ENCODE measurements at regions of chrX and their contacts with region 1.

Region 1: DNA sequence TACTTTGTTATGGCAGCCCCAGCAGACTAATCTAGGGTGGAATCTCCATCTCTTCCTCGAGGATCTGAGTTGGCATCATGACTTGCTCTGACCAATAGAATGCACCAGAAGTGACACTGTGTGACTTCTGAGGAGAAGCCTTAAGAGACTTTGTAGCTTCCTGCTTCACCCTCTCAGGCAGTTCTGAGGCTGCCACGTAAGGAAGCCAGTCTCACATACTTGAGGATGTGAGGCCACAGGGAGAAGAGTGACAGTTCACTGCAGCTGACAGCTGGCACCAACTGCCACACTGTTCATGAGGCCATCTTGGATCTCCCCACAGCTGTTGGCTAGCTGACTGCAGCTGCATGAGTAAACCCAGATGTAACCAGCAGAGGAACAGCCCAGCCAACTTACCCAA is 29.3 kb upstream of the BCOR start:
- DNase-seq: no peak
- ATAC-seq: no peak
- H3K4me3 ChIP-seq: no peak overlapping the region
- H3K27ac ChIP-seq: no peak overlapping the region
- H3K4me1 ChIP-seq: peaks cover 0 to 12% (median 0%) of the 10 kb centered on the region in 9 donors
- H3K27me3 ChIP-seq: no peaks in the 10 kb centered on the region
- CTCF ChIP-seq: no peak

Region 2: DNA sequence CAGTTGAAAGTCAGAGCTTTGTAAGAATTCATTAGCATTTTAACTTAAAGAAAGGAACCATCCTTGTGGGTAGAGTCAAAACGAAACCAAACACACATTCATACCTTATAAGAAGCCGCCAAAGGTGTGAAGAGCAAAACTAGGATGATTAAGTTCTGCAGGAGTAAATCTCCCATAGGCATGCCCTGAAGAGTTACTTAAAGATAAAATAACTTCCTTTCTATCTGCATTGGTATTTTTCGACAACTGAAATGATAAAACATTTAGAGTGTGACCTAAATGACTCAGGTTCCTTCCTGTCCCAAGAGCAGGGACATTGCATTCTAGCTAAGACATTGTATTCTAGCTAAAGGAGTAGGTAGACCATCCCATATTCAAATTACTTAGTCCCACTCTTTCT is 104.6 kb before region 1 on chrX:
- intact Hi-C with region 1: no loop called
- DNase-seq: no peak
- ATAC-seq: no peak
- H3K4me3 ChIP-seq: no peak overlapping the region
- H3K27ac ChIP-seq: no peak overlapping the region
- H3K4me1 ChIP-seq: peaks cover 0 to 5% (median 0%) of the 10 kb centered on the region in 9 donors
- H3K27me3 ChIP-seq: no peaks in the 10 kb centered on the region
- CTCF ChIP-seq: no peak

Region 3: GRCh38 chrX:40086569-40087335 is 40.3 kb before region 1 on chrX:
- intact Hi-C with region 1: loop called in 1 of 10 experiments (anchors 2 kb)
- DNase-seq: no peak
- ATAC-seq: no peak
- H3K4me3 ChIP-seq: no peak overlapping the region
- H3K27ac ChIP-seq: no peak overlapping the region
- H3K4me1 ChIP-seq: peaks cover 0 to 91% (median 57%) of the 10 kb centered on the region in 9 donors
- H3K27me3 ChIP-seq: peaks cover 0 to 100% (median 0%) of the 10 kb centered on the region in 7 donors
- CTCF ChIP-seq: no peak